ENCODE measurements at regions of chr2 and their contacts with region 1.

Region 1: DNA sequence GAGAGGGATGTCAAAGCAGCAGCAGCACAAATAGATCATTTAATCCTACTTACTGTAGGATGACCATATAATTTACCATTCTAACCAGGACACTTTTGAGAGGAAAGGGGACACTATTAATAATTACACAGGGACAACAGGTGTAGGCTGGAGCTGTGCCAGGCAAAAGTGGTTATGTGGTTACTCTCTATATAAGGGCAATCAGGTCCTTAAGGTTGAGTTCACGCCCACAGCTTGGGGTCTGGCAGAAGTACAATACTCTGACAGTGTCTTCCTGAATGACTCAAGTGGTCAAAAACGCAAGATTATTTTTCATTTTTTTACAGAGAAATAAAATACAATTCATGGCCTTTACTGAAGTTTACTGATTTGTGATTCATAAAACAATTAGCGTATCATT is 2.8 kb downstream of the PREPL start:
- DNase-seq: peak in 1 of 2 donors; percentile 42
- H3K4me3 ChIP-seq: no peak overlapping the region
- H3K27ac ChIP-seq: no peak overlapping the region
- H3K4me1 ChIP-seq: peaks cover 0 to 56% (median 22%) of the 10 kb centered on the region in 4 donors
- H3K27me3 ChIP-seq: no peaks in the 10 kb centered on the region
- CTCF ChIP-seq: no peak

Region 2: DNA sequence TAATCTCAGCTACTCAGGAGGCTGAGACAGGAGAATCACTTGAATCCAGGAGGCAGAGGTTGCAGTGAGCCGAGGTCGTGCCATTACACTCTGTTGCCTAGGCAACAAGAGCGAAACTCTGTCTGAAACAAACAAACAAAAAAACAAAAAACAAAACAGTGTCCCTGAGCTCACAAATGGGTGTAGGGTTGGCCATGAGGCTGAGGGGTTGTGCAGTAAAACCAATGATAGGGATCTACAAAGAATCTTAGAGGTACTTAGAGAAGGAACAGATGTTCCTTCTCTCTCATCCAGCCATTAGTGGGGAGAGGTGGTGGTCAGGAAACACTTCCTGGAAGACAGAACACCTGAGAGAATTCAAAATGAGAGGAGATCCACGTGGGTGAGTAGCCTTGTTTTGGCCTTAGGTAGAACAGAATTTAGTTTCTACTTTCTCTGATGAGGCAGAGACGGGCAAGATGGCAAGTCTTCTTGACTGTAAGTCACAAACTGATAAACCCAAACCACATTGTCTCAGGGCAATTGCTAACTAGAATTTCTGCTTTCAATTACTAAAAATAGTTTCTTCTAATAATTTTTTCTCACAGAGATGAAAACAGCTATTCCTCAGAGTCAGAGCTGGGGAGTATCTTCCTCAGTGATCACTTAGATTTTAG is 251.3 kb before region 1 on chr2:
- intact Hi-C with region 1: no loop called
- DNase-seq: no peak
- H3K4me3 ChIP-seq: no peak overlapping the region
- H3K27ac ChIP-seq: no peak overlapping the region
- H3K4me1 ChIP-seq: no peaks in the 10 kb centered on the region
- H3K27me3 ChIP-seq: no peaks in the 10 kb centered on the region
- CTCF ChIP-seq: no peak

Region 3: GRCh38 chr2:44201648-44202165 is 156.8 kb before region 1 on chr2:
- intact Hi-C with region 1: no loop called
- DNase-seq: peak in 1 of 2 donors; percentile 34
- H3K4me3 ChIP-seq: no peak overlapping the region
- H3K27ac ChIP-seq: no peak overlapping the region
- H3K4me1 ChIP-seq: peaks cover 0 to 43% (median 0%) of the 10 kb centered on the region in 4 donors
- H3K27me3 ChIP-seq: no peaks in the 10 kb centered on the region
- CTCF ChIP-seq: no peak

Region 4: GRCh38 chr2:44324971-44325426 is 33.5 kb before region 1 on chr2:
- intact Hi-C with region 1: no loop called
- DNase-seq: no peak
- H3K4me3 ChIP-seq: no peak overlapping the region
- H3K27ac ChIP-seq: peak overlapping the region; percentile 45 to 64
- H3K4me1 ChIP-seq: peaks cover 0 to 26% (median 16%) of the 10 kb centered on the region in 4 donors
- H3K27me3 ChIP-seq: no peaks in the 10 kb centered on the region
- CTCF ChIP-seq: no peak

Region 5: GRCh38 chr2:44479122-44479887 is 120.8 kb after region 1 on chr2:
- intact Hi-C with region 1: no loop called
- DNase-seq: peak in 1 of 2 donors; percentile 24
- H3K4me3 ChIP-seq: no peak overlapping the region
- H3K27ac ChIP-seq: no peak overlapping the region
- H3K4me1 ChIP-seq: no peaks in the 10 kb centered on the region
- H3K27me3 ChIP-seq: no peaks in the 10 kb centered on the region
- CTCF ChIP-seq: peak; percentile 99 to 100

Region 6: DNA sequence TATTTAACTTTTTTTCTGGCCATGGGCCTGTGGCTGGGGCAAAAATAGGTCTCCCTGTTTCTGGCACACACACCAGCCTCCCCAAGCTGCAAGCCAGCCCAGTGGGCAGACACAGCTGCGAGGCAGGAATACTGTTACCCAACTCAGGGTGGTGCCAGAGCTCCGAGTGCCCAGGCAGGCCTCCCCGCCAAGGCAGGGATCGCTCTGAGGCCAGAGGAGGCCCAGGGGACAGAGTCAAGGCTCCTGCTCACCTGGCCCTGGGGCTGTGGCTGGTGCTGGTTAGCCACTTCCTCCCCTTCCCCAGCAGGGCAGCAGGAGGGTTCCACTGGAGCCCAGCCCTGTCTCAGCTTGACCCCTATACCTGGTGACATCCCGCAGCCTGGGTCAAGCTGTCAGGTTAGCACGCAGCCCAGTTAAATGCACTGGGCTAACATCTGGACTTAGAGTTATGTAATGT is 1871.6 kb after region 1 on chr2:
- intact Hi-C with region 1: loop called (anchors 10 kb)
- DNase-seq: peak; percentile 53 to 85
- H3K4me3 ChIP-seq: no peak overlapping the region
- H3K27ac ChIP-seq: peak overlapping the region in 1 of 2 donors; percentile 46
- H3K4me1 ChIP-seq: peaks cover 0 to 20% (median 6%) of the 10 kb centered on the region in 4 donors
- H3K27me3 ChIP-seq: no peaks in the 10 kb centered on the region
- CTCF ChIP-seq: peak; percentile 40 to 54

Measured in tibial artery (tissue), 4 donors.